CD8-positive, alpha-beta T cell (primary cell): ENCODE measurements at regions of chr4 and their contacts with region 1.

Region 1: DNA sequence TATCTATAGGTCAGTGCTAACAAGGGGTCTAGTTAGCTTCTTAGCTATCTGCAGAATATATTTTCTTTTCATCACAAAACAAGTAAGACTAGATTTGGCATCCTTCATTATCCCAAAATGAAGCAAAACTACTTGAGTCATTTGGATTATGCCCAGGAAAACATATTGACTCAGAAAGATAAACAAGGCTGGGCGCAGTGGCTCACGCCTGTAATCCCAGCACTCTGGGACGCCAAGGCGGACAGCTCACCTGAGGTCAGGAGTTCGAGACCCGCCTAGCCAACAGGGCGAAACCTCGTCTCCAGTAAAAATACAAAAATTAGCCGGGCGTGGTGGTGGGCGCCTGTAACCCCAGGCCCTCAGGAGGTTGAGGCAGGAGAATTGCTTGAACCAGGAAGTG is 18.0 kb upstream of the MND1 start:
- DNase-seq: no peak
- ATAC-seq: no peak
- H3K4me3 ChIP-seq: no peak overlapping the region
- H3K4me3 Mint-ChIP-seq: no peak overlapping the region
- H3K27ac ChIP-seq: no peak overlapping the region
- H3K27ac Mint-ChIP-seq: no peak overlapping the region
- H3K4me1 ChIP-seq: no peaks in the 10 kb centered on the region
- H3K4me1 Mint-ChIP-seq: no peaks in the 10 kb centered on the region
- H3K27me3 ChIP-seq: peaks cover 0 to 2% of the 10 kb centered on the region in 2 experiments
- H3K27me3 Mint-ChIP-seq: peaks cover 4% of the 10 kb centered on the region
- CTCF ChIP-seq: no peak

Region 2: GRCh38 chr4:151841107-151841506 is 1485.4 kb before region 1 on chr4:
- CTCF ChIA-PET with region 1: no interaction called
- POLR2A ChIA-PET with region 1: no interaction called
- intact Hi-C with region 1: loop called in 1 of 2 experiments (anchors 5 kb)
- DNase-seq: no peak
- ATAC-seq: no peak
- H3K4me3 ChIP-seq: no peak overlapping the region
- H3K4me3 Mint-ChIP-seq: no peak overlapping the region
- H3K27ac ChIP-seq: no peak overlapping the region
- H3K27ac Mint-ChIP-seq: no peak overlapping the region
- H3K4me1 ChIP-seq: no peaks in the 10 kb centered on the region
- H3K4me1 Mint-ChIP-seq: no peaks in the 10 kb centered on the region
- H3K27me3 ChIP-seq: no peaks in the 10 kb centered on the region
- H3K27me3 Mint-ChIP-seq: no peaks in the 10 kb centered on the region
- CTCF ChIP-seq: no peak

Region 3: DNA sequence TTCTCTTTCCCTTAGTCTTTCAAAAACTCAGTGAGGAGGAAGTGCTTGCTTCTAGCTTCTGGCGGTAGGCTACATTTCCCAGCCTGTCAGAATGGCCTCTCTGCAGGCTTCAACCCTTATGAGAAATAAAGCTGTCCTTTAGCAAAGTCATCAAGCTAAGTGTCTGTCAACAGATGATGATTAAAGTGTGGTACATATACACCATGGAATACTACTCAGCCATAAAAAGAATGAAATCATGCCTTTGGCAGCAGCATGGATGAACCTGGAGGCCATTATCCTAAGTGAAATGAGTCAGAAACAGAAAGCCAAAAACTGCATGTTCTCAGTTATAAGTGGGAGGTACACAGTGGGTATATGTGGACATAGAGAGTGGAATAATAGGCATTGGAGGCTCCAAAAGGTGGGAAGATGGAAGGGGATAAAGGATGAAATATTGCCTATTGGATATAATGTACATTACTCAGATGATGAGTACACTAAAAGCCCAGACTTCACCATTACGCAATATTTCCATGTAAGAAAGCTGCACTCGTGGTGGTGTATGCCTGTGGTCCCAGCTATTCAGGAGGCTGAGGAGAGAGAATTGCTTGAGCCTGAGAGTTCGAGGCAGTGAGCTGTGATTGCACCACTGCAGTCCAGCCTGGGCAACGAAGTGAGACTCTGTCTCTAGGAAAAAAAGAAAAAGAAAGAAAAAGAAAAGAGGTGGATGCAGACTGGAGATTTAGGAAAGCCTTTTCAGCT is 114.4 kb before region 1 on chr4:
- CTCF ChIA-PET with region 1: no interaction called
- POLR2A ChIA-PET with region 1: no interaction called
- intact Hi-C with region 1: loop called in 1 of 2 experiments (anchors 10 kb)
- DNase-seq: no peak
- ATAC-seq: no peak
- H3K4me3 ChIP-seq: no peak overlapping the region
- H3K4me3 Mint-ChIP-seq: no peak overlapping the region
- H3K27ac ChIP-seq: no peak overlapping the region
- H3K27ac Mint-ChIP-seq: no peak overlapping the region
- H3K4me1 ChIP-seq: no peaks in the 10 kb centered on the region
- H3K4me1 Mint-ChIP-seq: peaks cover 10% of the 10 kb centered on the region
- H3K27me3 ChIP-seq: no peaks in the 10 kb centered on the region
- H3K27me3 Mint-ChIP-seq: no peaks in the 10 kb centered on the region
- CTCF ChIP-seq: no peak